Activated CD4-positive, alpha-beta T cell treated with anti-CD3 and anti-CD28 coated beads for 36 hours (primary cell): ENCODE measurements at regions of chr2 and their contacts with region 1.

Region 1: GRCh38 chr2:169928463-169928864 is 101.2 kb downstream of the UBR3 start:
- DNase-seq: no peak
- ATAC-seq: peak; percentile 36
- H3K4me3 Mint-ChIP-seq: no peak overlapping the region
- H3K27ac Mint-ChIP-seq: no peak overlapping the region
- H3K4me1 Mint-ChIP-seq: no peaks in the 10 kb centered on the region
- H3K27me3 Mint-ChIP-seq: no peaks in the 10 kb centered on the region

Region 2: DNA sequence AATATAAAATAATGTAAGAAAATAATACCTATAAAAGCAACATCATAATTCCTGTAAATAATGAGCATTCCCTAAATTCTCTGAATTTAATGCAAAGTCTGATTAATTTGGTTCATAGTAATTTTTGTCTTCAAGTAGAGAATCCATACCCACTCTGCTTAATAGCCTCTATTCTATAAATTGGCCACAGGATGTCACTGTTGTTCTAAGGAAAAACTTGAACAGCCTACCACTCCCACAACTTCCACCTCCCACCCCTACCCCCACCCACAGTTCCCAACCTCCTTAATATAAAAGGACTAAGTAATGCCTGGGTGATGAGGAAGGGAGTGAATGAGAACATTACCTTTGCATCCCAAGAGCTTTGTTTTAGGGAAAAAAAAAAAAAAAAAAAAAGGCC is 476.4 kb before region 1 on chr2:
- CTCF ChIA-PET with region 1: no interaction called
- POLR2A ChIA-PET with region 1: no interaction called
- intact Hi-C with region 1: loop called in 1 of 2 experiments (anchors 5 kb)
- DNase-seq: no peak
- ATAC-seq: no peak
- H3K4me3 Mint-ChIP-seq: no peak overlapping the region
- H3K27ac Mint-ChIP-seq: no peak overlapping the region
- H3K4me1 Mint-ChIP-seq: no peaks in the 10 kb centered on the region
- H3K27me3 Mint-ChIP-seq: peaks cover 4% of the 10 kb centered on the region

Region 3: GRCh38 chr2:170227507-170227947 is 299.1 kb after region 1 on chr2:
- CTCF ChIA-PET with region 1: no interaction called
- POLR2A ChIA-PET with region 1: no interaction called
- intact Hi-C with region 1: no loop called
- DNase-seq: no peak
- ATAC-seq: no peak
- H3K4me3 Mint-ChIP-seq: no peak overlapping the region
- H3K27ac Mint-ChIP-seq: no peak overlapping the region
- H3K4me1 Mint-ChIP-seq: no peaks in the 10 kb centered on the region
- H3K27me3 Mint-ChIP-seq: no peaks in the 10 kb centered on the region